Activated CD4-positive, alpha-beta memory T cell treated with anti-CD3 and anti-CD28 coated beads for 36 hours (primary cell): ENCODE measurements at regions of chr5 and their contacts with region 1.

Region 1: GRCh38 chr5:120655828-120656435 is 191.8 kb downstream of the PRR16 start:
- DNase-seq: peak; percentile 12
- H3K4me3 Mint-ChIP-seq: no peak overlapping the region
- H3K27ac Mint-ChIP-seq: no peak overlapping the region
- H3K4me1 Mint-ChIP-seq: no peaks in the 10 kb centered on the region
- H3K27me3 Mint-ChIP-seq: no peaks in the 10 kb centered on the region

Region 2: GRCh38 chr5:120436996-120437395 is 218.9 kb before region 1 on chr5:
- CTCF ChIA-PET with region 1: no interaction called
- POLR2A ChIA-PET with region 1: no interaction called
- intact Hi-C with region 1: no loop called
- DNase-seq: no peak
- H3K4me3 Mint-ChIP-seq: no peak overlapping the region
- H3K27ac Mint-ChIP-seq: no peak overlapping the region
- H3K4me1 Mint-ChIP-seq: no peaks in the 10 kb centered on the region
- H3K27me3 Mint-ChIP-seq: no peaks in the 10 kb centered on the region

Region 3: DNA sequence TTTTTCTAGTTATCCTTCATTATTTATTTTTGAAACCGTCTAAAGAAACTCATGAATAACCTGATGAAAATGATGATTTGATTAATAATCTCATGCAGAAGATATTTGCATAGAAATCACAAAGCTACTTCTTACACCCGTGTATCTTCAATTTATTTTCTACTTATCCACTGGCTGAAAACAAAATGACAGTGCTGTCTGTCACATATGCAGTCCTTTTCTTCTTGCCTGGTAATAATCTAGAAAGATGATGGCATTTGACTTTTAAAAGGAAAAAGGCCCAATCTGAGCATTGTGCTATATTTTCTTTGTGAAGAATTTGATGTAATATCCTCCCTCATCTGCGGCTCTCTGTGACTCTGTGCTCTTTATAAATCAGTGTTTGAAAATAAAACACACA is 61.4 kb after region 1 on chr5:
- CTCF ChIA-PET with region 1: no interaction called
- POLR2A ChIA-PET with region 1: no interaction called
- intact Hi-C with region 1: no loop called
- DNase-seq: no peak
- H3K4me3 Mint-ChIP-seq: no peak overlapping the region
- H3K27ac Mint-ChIP-seq: no peak overlapping the region
- H3K4me1 Mint-ChIP-seq: no peaks in the 10 kb centered on the region
- H3K27me3 Mint-ChIP-seq: no peaks in the 10 kb centered on the region

Region 4: DNA sequence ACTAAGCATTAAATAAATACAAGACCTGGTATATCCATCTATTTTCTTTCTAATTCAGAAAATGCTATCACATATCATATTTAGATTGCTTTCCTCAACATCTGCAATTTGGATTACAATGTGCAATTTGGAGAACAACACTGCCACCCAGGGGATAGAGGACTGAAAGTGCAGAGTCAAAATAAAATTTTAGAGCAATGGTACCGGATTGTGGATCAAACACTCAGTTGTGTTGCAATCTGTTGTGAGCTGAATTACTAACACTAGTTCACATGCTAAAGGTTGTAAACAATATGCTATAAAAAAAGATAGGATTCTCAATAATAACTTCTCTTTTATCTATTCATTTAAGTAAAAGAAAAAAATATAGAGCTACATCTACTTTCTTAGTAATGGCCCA is 1293.9 kb after region 1 on chr5:
- CTCF ChIA-PET with region 1: no interaction called
- POLR2A ChIA-PET with region 1: no interaction called
- intact Hi-C with region 1: loop called (anchors 2 kb)
- DNase-seq: peak; percentile 9
- H3K4me3 Mint-ChIP-seq: no peak overlapping the region
- H3K27ac Mint-ChIP-seq: no peak overlapping the region
- H3K4me1 Mint-ChIP-seq: no peaks in the 10 kb centered on the region
- H3K27me3 Mint-ChIP-seq: peaks cover 2% of the 10 kb centered on the region

Region 5: GRCh38 chr5:122101636-122102285 is 1445.8 kb after region 1 on chr5:
- CTCF ChIA-PET with region 1: no interaction called
- POLR2A ChIA-PET with region 1: no interaction called
- intact Hi-C with region 1: loop called (anchors 10 kb)
- DNase-seq: no peak
- H3K4me3 Mint-ChIP-seq: no peak overlapping the region
- H3K27ac Mint-ChIP-seq: no peak overlapping the region
- H3K4me1 Mint-ChIP-seq: no peaks in the 10 kb centered on the region
- H3K27me3 Mint-ChIP-seq: no peaks in the 10 kb centered on the region